ENCODE measurements at regions of chr4 and their contacts with region 1.

Region 1: GRCh38 chr4:53702334-53703266 is 111.3 kb upstream of the LNX1 start:
- DNase-seq: peak; percentile 25
- ATAC-seq: peak; percentile 64
- H3K4me3 Mint-ChIP-seq: peak overlapping the region; percentile 79
- H3K27ac Mint-ChIP-seq: peak overlapping the region; percentile 54
- H3K4me1 Mint-ChIP-seq: peaks cover 61% of the 10 kb centered on the region
- H3K27me3 Mint-ChIP-seq: no peaks in the 10 kb centered on the region
- CTCF ChIP-seq: no peak

Region 2: GRCh38 chr4:53717064-53717549 is 14.5 kb after region 1 on chr4:
- CTCF ChIA-PET with region 1: no interaction called
- POLR2A ChIA-PET with region 1: no interaction called
- intact Hi-C with region 1: no loop called
- DNase-seq: no peak
- ATAC-seq: no peak
- H3K4me3 Mint-ChIP-seq: no peak overlapping the region
- H3K27ac Mint-ChIP-seq: no peak overlapping the region
- H3K4me1 Mint-ChIP-seq: no peaks in the 10 kb centered on the region
- H3K27me3 Mint-ChIP-seq: peaks cover 7% of the 10 kb centered on the region
- CTCF ChIP-seq: no peak

Region 3: DNA sequence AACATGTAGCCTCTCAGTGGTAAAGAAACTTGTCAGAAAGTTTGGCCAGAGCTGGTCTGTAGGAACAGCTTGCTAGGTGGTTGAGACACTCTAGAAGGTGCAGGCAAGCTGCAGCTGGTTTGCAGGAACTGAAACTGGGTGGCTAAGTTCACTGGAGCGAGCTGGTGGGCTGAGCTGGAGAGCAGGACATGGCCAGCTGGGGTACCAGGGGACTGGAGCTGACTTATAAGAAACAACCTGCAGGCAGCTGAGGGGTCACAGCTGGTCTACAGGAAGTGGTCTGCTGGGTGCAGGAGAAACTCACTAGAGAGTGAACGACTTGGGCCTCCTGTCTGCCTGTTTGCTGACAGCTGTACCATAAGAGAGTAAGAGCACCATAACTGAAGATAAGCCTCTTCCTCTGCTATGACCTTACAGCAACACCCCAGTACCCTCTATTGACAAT is 45.8 kb after region 1 on chr4:
- CTCF ChIA-PET with region 1: interaction called, 14 read pairs
- POLR2A ChIA-PET with region 1: interaction called, 15 read pairs
- intact Hi-C with region 1: loop called (anchors 1 kb)
- DNase-seq: peak; percentile 46
- ATAC-seq: peak; percentile 94
- H3K4me3 Mint-ChIP-seq: peak overlapping the region; percentile 7
- H3K27ac Mint-ChIP-seq: peak overlapping the region; percentile 84
- H3K4me1 Mint-ChIP-seq: peaks cover 63% of the 10 kb centered on the region
- H3K27me3 Mint-ChIP-seq: no peaks in the 10 kb centered on the region
- CTCF ChIP-seq: no peak

Region 4: DNA sequence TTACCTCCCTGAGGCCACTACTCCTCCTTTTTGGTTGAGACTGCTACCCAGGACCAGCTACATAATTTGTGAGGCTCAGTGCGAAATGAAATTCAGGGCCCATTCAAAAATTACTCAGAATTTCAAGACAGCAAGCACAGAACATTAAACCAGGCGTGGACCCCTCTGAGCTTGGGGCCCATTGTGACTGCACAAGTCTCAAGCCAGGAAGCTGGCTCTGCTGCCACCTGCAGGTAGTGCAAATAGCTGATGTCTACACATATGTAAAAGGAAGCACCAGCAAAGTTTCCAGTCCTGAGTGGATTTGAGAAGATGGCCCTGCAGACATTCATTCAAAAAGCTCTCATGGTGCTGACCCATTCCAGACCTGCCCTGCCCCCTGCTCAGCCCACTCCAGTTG is 102.1 kb after region 1 on chr4:
- CTCF ChIA-PET with region 1: interaction called, 38 read pairs
- POLR2A ChIA-PET with region 1: no interaction called
- intact Hi-C with region 1: loop called (anchors 1 kb)
- DNase-seq: peak; percentile 23
- ATAC-seq: no peak
- H3K4me3 Mint-ChIP-seq: no peak overlapping the region
- H3K27ac Mint-ChIP-seq: no peak overlapping the region
- H3K4me1 Mint-ChIP-seq: no peaks in the 10 kb centered on the region
- H3K27me3 Mint-ChIP-seq: peaks cover 2% of the 10 kb centered on the region
- CTCF ChIP-seq: no peak

Region 5: GRCh38 chr4:53855581-53856250 is 153.1 kb after region 1 on chr4:
- CTCF ChIA-PET with region 1: no interaction called
- POLR2A ChIA-PET with region 1: no interaction called
- intact Hi-C with region 1: loop called (anchors 5 kb)
- DNase-seq: no peak
- ATAC-seq: peak; percentile 89
- H3K4me3 Mint-ChIP-seq: peak overlapping the region; percentile 53
- H3K27ac Mint-ChIP-seq: peak overlapping the region; percentile 79
- H3K4me1 Mint-ChIP-seq: peaks cover 28% of the 10 kb centered on the region
- H3K27me3 Mint-ChIP-seq: no peaks in the 10 kb centered on the region
- CTCF ChIP-seq: no peak

Region 6: GRCh38 chr4:53908661-53909078 is 206.1 kb after region 1 on chr4:
- CTCF ChIA-PET with region 1: interaction called, 4 read pairs
- POLR2A ChIA-PET with region 1: no interaction called
- intact Hi-C with region 1: loop called (anchors 2 kb)
- DNase-seq: no peak
- ATAC-seq: no peak
- H3K4me3 Mint-ChIP-seq: no peak overlapping the region
- H3K27ac Mint-ChIP-seq: no peak overlapping the region
- H3K4me1 Mint-ChIP-seq: peaks cover 13% of the 10 kb centered on the region
- H3K27me3 Mint-ChIP-seq: peaks cover 32% of the 10 kb centered on the region
- CTCF ChIP-seq: peak; percentile 36

Region 7: DNA sequence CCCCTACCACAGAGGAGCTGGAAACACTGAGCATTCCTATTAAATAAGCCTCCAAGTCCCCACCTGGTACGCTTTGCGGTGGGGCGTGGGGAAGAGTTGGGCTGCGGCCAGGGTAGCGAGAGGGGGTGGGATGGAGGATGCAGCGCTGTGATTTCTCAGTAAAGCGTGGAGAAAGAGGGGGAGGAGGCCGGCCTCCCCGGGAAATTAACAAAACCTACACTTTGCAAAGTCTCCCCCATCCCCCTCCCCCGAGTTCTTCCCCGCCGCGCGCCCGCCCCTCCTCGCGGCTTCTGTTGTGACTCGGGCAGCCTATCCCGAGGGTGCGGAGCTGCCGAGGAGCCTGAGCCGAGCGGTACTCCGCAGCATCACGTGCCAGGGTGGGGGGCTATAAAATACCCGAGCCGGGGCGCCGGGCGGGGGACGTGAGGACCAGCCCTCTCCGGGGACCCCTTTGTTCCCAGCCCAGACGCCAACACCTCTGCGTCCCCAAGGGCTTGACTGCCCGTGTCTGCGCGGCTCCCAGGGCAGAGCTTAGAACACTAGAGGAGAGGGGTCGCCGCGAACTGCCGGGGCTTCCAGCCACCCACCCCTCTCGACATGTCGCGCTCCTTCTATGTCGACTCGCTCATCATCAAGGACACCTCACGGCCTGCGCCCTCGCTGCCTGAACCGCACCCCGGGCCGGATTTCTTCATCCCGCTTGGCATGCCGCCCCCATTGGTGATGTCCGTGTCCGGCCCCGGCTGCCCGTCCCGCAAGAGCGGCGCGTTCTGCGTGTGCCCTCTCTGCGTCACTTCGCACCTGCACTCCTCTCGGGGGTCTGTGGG is 397.4 kb after region 1 on chr4 and contains the start of gene GSX2:
- CTCF ChIA-PET with region 1: no interaction called
- POLR2A ChIA-PET with region 1: no interaction called
- intact Hi-C with region 1: loop called (anchors 10 kb)
- DNase-seq: no peak
- ATAC-seq: peak; percentile 16
- H3K4me3 Mint-ChIP-seq: peak within 1 kb of the TSS; percentile 64
- H3K27ac Mint-ChIP-seq: no peak within 1 kb of the TSS
- H3K4me1 Mint-ChIP-seq: peaks cover 52% of the 10 kb centered on the region
- H3K27me3 Mint-ChIP-seq: peaks cover 77% of the 10 kb centered on the region
- CTCF ChIP-seq: no peak
- total RNA-seq, gene GSX2: not detected in 2 replicates

Region 8: DNA sequence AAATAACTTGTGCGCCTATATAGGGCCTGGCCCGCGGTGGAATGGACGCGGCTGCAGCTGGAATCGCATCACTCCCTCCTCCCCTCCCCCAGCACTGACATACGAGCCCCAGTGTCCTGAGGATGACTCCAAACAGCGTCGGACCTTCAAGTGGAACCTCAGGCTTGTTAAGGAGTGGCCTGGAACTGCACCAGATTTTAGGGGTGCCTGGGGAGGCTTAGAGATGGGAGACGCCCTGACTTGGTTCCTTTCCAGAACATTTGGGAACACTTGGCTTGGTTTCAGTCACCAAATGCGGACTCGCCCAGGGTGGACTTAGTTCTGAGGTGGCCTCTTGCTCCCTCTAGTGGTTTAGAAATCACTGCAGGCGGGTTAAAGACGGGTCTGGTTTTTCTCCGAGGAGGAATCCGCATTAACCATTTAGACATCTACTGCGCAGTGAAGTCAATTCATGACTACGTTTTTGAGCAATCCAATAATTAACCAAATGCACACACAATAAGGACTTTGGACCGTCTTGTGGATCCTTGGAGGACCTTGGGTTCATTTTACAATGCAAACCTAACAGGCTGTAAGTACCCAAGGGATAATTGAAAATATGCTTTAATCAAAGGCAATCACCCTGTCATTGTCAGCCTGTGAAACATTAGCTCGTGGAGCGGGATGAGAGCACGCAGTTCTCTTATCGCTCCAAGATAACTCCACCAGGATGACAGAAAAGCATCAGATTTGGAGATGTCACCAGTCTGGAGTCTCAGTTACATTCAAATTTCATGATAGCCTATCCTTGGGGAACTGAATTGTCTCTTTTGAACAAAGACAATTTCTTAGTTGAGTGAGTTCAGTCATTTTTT is 515.3 kb after region 1 on chr4:
- CTCF ChIA-PET with region 1: no interaction called
- POLR2A ChIA-PET with region 1: no interaction called
- intact Hi-C with region 1: loop called (anchors 2 kb)
- DNase-seq: peak; percentile 27
- ATAC-seq: peak; percentile 66
- H3K4me3 Mint-ChIP-seq: peak overlapping the region; percentile 16
- H3K27ac Mint-ChIP-seq: no peak overlapping the region
- H3K4me1 Mint-ChIP-seq: peaks cover 4% of the 10 kb centered on the region
- H3K27me3 Mint-ChIP-seq: peaks cover 23% of the 10 kb centered on the region
- CTCF ChIP-seq: no peak